HEK293 (cell line): ENCODE measurements at regions of chr9 and their contacts with region 1.

Region 1: GRCh38 chr9:82805027-82805426 is 257.9 kb downstream of the RASEF start:
- H3K4me3 ChIP-seq: no peak overlapping the region
- H3K27ac ChIP-seq: no peak overlapping the region
- H3K4me1 ChIP-seq: no peaks in the 10 kb centered on the region
- CTCF ChIP-seq: peak; percentile 34; the same call in 1 of the 2 replicates

Region 2: GRCh38 chr9:82532504-82533180 is 272.4 kb before region 1 on chr9:
- CTCF ChIA-PET with region 1: interaction called, 15 read pairs
- POLR2A ChIA-PET with region 1: no interaction called
- H3K4me3 ChIP-seq: no peak overlapping the region
- H3K27ac ChIP-seq: no peak overlapping the region
- H3K4me1 ChIP-seq: no peaks in the 10 kb centered on the region
- CTCF ChIP-seq: no peak